ENCODE measurements at regions of chr11 and their contacts with region 1.

Region 1: GRCh38 chr11:82718307-82718706 is 15.4 kb downstream of the FAM181B start:
- DNase-seq: peak; percentile 76
- ATAC-seq: peak; percentile 71
- H3K4me3 ChIP-seq: no peak overlapping the region
- H3K27ac ChIP-seq: no peak overlapping the region
- H3K4me1 ChIP-seq: no peaks in the 10 kb centered on the region
- H3K27me3 ChIP-seq: no peaks in the 10 kb centered on the region
- CTCF ChIP-seq: peak; percentile 95

Region 2: DNA sequence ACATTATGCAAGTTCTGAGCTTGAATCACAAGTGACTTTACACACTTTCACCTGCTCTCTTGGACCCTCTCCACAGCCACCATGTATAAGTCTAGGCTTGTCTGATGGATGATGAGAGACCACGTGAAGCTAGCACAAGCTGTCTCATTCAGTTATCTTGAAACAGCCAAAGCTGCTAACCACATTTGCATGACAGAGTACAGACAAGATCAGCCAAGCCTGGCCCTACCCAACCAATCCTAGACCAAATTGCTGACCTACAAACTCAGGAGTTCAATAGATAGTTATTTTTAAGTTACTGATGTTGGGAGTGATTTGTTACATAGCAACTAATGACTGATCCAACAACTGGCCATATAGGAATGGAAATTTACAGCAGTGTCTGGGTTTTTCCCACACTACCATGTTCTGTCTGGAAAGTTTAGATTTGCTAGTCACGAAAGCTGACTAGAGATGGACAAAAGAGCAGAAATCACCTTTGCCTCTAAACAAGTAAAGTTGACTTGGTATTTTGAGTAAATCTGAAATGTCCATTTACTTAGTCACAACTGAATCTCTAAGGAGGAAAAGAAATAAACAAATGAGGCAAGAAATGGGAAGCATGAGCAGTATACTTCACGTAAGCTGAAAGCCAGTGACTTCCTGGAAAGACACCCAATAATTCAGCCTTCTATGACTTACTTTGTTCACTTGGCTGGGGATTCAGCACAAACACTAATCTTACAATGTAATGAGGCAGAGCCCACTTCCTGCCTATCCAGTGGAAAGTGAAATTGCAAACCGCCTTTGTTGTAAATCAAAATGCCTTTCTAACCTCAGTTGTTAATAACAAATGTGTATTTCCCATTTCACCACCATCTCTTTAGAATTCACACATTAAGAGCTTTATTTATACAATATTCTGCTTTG is 86.3 kb before region 1 on chr11:
- CTCF ChIA-PET with region 1: no interaction called
- POLR2A ChIA-PET with region 1: no interaction called
- intact Hi-C with region 1: no loop called
- DNase-seq: peak; percentile 26
- ATAC-seq: no peak
- H3K4me3 ChIP-seq: no peak overlapping the region
- H3K27ac ChIP-seq: no peak overlapping the region; the same call in 1 of the 2 replicates
- H3K4me1 ChIP-seq: no peaks in the 10 kb centered on the region
- H3K27me3 ChIP-seq: no peaks in the 10 kb centered on the region
- CTCF ChIP-seq: no peak

Region 3: GRCh38 chr11:82867495-82868082 is 149.3 kb after region 1 on chr11:
- CTCF ChIA-PET with region 1: interaction called, 4 read pairs
- POLR2A ChIA-PET with region 1: no interaction called
- intact Hi-C with region 1: loop called (anchors 1 kb)
- DNase-seq: peak; percentile 92
- ATAC-seq: peak; percentile 31
- H3K4me3 ChIP-seq: peak overlapping the region; percentile 40; the same call in 1 of the 2 replicates
- H3K27ac ChIP-seq: no peak overlapping the region
- H3K4me1 ChIP-seq: peaks cover 11% of the 10 kb centered on the region
- H3K27me3 ChIP-seq: no peaks in the 10 kb centered on the region
- CTCF ChIP-seq: peak; percentile 95

Region 4: GRCh38 chr11:82927254-82927880 is 209.1 kb after region 1 on chr11:
- CTCF ChIA-PET with region 1: no interaction called
- POLR2A ChIA-PET with region 1: no interaction called
- intact Hi-C with region 1: loop called (anchors 5 kb)
- DNase-seq: peak; percentile 80
- ATAC-seq: peak; percentile 89
- H3K4me3 ChIP-seq: no peak overlapping the region
- H3K27ac ChIP-seq: no peak overlapping the region
- H3K4me1 ChIP-seq: no peaks in the 10 kb centered on the region
- H3K27me3 ChIP-seq: no peaks in the 10 kb centered on the region
- CTCF ChIP-seq: peak; percentile 94

Region 5: DNA sequence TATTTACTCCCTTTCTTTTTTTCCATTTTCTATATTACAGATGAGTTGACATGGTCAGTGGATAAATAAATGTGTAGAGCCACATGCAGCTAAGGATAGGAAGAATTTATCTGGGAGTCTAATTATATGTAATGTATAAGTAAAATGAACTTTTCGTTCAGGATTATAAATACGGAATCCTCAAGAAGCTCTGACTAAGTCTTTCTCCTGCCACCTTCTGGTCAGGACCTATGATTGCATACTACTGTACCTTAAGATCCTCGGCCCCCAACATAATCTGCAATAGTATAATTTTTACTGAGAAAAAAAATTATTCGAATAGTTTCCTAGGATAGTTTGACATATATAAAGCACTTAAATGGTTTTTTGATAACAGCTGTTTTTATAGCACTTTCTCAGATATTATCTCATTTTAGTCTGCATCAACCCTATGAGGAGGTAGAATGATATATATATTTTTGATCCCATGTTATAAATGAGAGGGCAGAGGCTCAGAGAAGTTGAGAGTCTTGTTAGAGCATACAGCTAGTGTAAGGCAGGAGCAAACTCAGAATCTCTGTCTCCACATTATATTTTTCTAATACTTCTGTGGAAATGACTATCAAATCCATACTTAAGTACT is 531.8 kb after region 1 on chr11:
- CTCF ChIA-PET with region 1: no interaction called
- POLR2A ChIA-PET with region 1: no interaction called
- intact Hi-C with region 1: loop called (anchors 1 kb)
- DNase-seq: peak; percentile 70
- ATAC-seq: peak; percentile 89
- H3K4me3 ChIP-seq: no peak overlapping the region
- H3K27ac ChIP-seq: no peak overlapping the region
- H3K4me1 ChIP-seq: peaks cover 2% of the 10 kb centered on the region; the same call in 1 of the 2 replicates
- H3K27me3 ChIP-seq: no peaks in the 10 kb centered on the region
- CTCF ChIP-seq: peak; percentile 89

Region 6: DNA sequence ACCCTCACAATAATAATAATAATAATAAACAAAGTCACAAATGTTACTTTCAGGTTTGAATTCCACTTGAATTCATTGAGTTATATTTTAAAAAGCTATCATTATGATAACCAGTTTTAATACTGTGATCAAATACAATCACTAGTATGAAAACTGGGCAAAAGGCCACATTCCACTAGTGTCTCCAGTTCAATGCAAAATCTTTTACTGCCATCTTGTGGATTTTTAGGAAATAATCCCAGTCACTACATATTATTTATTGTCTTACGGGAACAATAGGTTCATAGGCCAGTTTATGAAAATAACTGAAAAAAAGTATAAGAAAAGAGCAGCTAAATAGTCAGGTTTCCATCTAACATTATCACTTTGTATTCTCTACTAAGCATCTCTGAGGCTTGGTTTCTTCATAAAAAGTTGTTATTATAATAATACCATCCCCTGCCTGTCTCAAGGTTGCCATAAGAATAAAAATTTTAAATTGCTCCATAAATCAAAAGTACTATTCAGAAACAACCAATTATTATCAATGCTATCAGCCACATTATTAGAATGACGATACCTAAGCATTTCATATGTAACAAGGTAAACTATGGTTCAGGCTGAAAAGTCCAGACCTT is 1101.7 kb after region 1 on chr11:
- CTCF ChIA-PET with region 1: no interaction called
- POLR2A ChIA-PET with region 1: no interaction called
- intact Hi-C with region 1: loop called (anchors 10 kb)
- DNase-seq: peak; percentile 80
- ATAC-seq: peak; percentile 74; the same call in 1 of the 2 replicates
- H3K4me3 ChIP-seq: no peak overlapping the region
- H3K27ac ChIP-seq: no peak overlapping the region
- H3K4me1 ChIP-seq: peaks cover 5% of the 10 kb centered on the region; the same call in 1 of the 2 replicates
- H3K27me3 ChIP-seq: peaks cover 14% of the 10 kb centered on the region
- CTCF ChIP-seq: peak; percentile 88